ENCODE measurements at regions of chr2 and their contacts with region 1.

Region 1: DNA sequence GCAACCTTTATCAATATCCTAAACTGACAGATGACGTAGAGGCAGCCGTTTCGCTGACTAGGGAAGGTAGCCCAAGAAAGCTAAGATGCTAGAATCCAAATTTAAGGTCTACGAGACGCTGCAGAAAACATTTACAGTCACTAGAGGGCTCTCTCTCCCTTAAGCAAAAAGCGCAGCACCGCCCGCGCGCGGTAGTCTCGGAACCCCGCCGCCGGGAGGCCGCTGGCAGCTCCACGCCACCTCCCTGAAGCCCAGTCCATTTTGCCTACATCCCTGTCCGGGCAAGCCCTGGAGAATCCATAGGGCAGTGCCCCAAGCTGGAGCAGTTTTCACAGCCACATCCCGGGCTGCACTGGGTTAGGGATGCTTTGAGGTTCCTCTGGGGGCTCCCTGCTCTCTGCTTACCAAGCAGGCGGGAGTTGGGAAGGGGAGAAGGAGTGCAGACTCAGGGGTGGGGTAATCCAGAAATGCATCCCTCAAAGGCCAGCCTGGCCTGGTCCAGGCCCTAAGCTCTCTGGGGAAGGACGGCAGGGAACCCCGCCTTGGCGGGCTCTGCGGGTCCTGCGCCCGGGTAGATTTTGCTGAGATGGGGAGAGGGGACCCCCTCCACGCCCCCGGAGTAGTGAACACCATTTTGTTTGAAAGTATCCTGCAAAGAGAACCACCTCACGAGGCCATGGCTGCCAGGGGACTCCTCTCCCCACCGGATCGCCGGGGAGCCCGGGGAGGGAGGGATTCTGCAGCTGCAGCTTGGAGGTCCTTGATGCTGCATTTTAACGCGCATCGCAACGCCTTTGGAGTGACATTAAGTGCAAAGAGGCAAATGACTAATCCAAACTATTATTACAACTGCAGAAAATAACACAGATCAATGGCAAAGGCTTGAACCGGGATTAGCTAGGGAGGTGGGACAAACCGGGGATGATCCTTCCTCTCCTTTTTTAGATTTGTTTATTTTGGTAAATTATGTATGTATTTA is 1.3 kb upstream of the DPYSL5 start:
- DNase-seq: peak; percentile 44
- H3K4me3 ChIP-seq: no peak overlapping the region
- H3K27ac ChIP-seq: no peak overlapping the region
- H3K4me1 ChIP-seq: peaks cover 22% of the 10 kb centered on the region
- H3K27me3 ChIP-seq: peaks cover 34% of the 10 kb centered on the region
- CTCF ChIP-seq: peak in 3 of 4 experiments; percentile 58 to 76 (median 71)
- POLR2A ChIP-seq: no peak

Region 2: GRCh38 chr2:25844089-25844488 is 1002.5 kb before region 1 on chr2:
- intact Hi-C with region 1: no loop called
- DNase-seq: no peak
- H3K4me3 ChIP-seq: no peak overlapping the region
- H3K27ac ChIP-seq: no peak overlapping the region
- H3K4me1 ChIP-seq: no peaks in the 10 kb centered on the region
- H3K27me3 ChIP-seq: no peaks in the 10 kb centered on the region
- CTCF ChIP-seq: no peak
- POLR2A ChIP-seq: no peak

Region 3: DNA sequence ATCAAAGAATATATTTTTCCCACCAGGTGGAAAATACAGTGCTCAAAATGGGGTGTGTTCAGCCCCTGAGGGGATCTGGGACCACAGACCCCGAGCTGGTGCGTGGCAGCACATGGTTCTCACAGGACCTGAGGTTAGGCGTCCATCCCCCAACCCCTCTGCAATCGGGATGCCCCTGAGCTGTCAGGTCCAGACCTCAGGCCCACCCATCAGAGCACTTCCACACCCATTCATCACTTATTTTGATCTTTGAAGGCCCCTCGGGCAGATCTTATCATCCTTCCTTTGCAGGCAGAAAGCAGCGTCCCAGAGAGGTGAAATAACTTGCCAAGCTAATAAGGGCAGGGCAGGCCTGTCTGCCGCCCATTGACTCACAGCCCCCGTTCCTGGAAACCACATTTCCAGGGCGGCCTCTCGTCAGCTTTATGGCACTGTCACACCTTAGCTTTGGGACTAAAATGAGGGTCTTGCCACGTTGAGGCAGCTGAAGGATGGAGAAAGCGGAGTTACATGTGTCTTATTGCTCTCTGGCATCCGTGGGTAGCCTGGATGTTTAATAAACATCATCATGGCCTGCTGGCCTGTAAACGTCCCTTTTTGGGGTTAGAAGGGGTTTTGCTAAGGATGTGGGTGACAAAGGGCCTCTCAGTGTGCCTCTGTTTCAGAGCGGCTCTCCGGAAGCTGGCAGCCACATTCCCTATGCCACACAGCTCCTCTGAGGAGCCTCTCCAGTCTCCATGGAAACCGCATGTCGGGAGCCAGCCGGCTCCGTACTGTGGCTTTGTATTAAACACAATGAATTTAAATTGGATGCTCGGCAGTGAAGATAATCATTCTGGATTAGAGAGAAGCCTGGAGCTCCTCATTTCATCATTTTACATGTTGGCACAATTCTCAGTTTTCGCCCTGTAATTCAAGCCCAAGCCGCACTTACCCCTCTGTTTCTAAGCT is 65.6 kb after region 1 on chr2:
- intact Hi-C with region 1: no loop called
- DNase-seq: no peak
- H3K4me3 ChIP-seq: no peak overlapping the region
- H3K27ac ChIP-seq: no peak overlapping the region
- H3K4me1 ChIP-seq: no peaks in the 10 kb centered on the region
- H3K27me3 ChIP-seq: no peaks in the 10 kb centered on the region
- CTCF ChIP-seq: no peak
- POLR2A ChIP-seq: no peak

Region 4: DNA sequence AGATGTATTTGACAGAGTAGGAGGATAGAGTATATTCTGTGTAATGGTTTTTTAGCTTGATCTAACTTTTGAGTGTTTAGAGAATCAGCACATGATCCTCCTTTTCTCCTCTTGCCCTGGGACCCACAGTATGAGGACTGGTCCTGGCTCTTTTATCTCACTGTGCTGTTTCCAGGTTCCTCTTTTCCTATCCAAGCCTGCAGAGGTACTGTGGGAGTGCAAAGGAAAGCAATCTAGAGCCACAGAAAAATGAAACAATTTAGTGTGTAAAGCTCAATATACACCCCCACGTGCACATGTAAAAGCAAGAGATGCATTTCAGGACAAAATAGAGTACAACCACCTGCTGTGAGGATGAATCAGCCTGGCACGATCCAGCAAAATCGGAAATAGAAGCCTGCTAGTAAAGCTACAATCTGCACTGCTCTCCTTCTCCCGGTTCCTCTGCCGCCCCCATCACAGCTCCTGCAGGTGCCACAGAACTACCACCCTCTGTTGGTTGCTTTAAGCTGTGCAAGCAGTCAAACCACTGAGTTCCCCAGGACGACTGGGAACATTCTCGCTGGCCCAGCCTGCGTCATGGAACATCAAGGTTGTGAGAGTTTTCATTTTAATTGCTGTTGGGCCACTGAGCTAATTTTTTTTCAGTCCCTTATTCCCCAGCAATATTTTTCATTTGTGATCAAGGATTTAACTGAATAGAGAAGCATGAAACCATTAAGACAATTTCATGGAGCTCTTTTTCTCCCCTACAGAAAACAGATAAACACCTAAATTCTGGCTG is 76.0 kb after region 1 on chr2:
- intact Hi-C with region 1: loop called (anchors 5 kb)
- DNase-seq: peak; percentile 26
- H3K4me3 ChIP-seq: no peak overlapping the region
- H3K27ac ChIP-seq: no peak overlapping the region
- H3K4me1 ChIP-seq: no peaks in the 10 kb centered on the region
- H3K27me3 ChIP-seq: no peaks in the 10 kb centered on the region
- CTCF ChIP-seq: peak in 3 of 4 experiments; percentile 27 to 58 (median 49)
- POLR2A ChIP-seq: no peak

Region 5: GRCh38 chr2:26942543-26943295 is 96.1 kb after region 1 on chr2:
- intact Hi-C with region 1: loop called (anchors 5 kb)
- DNase-seq: peak; percentile 42
- H3K4me3 ChIP-seq: no peak overlapping the region
- H3K27ac ChIP-seq: no peak overlapping the region
- H3K4me1 ChIP-seq: no peaks in the 10 kb centered on the region
- H3K27me3 ChIP-seq: no peaks in the 10 kb centered on the region
- CTCF ChIP-seq: peak; percentile 70 to 87 (median 78)
- POLR2A ChIP-seq: no peak

Region 6: DNA sequence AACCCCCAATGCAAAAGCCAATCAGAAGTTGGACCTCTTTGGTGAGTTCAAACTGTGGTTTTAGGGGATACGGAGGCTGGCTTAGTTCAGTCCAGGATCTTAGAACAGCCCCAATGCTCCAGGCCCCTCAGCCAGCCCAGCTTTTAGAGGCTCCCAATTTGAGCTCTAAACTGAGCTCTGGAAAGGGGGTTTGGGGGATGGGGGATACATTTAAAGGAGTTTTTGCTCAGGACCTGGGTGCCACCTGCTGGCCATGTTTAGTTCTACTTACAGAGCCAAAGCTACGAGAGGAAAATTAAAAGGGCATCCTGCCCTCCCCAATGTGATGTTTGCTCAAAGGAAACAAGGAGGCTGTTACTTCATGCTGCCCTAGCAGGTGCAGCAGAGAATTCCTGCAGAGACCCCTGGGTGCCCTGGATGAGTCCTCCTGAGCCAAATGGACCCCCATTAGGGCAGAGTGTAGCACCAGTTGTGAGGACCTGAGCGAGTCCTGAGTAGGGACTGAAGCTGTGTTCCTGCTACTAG is 170.2 kb after region 1 on chr2:
- intact Hi-C with region 1: loop called (anchors 5 kb)
- DNase-seq: peak; percentile 25
- H3K4me3 ChIP-seq: no peak overlapping the region
- H3K27ac ChIP-seq: no peak overlapping the region
- H3K4me1 ChIP-seq: no peaks in the 10 kb centered on the region
- H3K27me3 ChIP-seq: no peaks in the 10 kb centered on the region
- CTCF ChIP-seq: peak; percentile 57 to 77 (median 72)
- POLR2A ChIP-seq: no peak